Naive thymus-derived CD4-positive, alpha-beta T cell (primary cell): ENCODE measurements at regions of chr10 and their contacts with region 1.

Region 1: DNA sequence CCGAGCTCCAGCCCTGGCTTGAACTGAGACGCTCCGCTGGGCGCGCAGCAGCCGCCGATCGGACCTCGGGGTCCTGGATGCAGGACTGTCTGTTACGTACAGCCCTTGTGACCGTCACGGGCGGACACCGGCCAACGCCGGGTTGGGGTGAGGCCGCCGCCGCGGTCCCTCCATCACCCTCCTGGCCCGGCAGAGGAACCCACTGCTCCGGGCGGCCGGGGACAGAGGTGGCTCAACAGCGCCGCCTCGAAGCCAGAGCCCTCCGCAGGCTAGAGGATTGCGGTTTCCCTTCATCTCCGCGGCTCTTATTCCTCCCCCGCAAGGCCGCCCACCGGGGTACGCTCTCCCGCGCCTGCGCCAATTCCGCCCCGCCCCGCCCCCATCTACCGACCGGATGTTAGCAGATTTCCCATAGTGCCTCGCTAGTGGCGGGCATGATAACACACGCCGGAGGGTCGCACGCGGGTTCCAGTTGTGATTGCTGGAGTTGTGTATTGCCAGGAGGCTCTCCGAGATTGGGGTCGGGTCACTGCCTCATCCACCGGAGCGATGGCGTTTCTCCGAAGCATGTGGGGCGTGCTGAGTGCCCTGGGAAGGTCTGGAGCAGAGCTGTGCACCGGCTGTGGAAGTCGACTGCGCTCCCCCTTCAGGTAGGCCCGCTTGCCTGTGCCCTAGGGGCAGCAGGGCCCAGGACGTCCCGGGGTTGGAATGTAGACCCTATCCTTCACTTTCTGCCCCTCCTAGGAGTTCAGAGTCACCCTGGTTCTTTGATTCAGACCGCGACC is at the start of gene TFAM:
- DNase-seq: peak; percentile 90 to 97 (median 93)
- ATAC-seq: peak; percentile 91
- H3K4me3 ChIP-seq: peak within 1 kb of the TSS; percentile 95
- H3K4me3 Mint-ChIP-seq: peak within 1 kb of the TSS; percentile 96 to 99 (median 98)
- H3K27ac ChIP-seq: peak within 1 kb of the TSS; percentile 86
- H3K27ac Mint-ChIP-seq: peak within 1 kb of the TSS; percentile 91 to 98 (median 96)
- H3K4me1 ChIP-seq: peaks cover 20 to 30% of the 10 kb centered on the region in 2 donors
- H3K4me1 Mint-ChIP-seq: peaks cover 24 to 61% (median 53%) of the 10 kb centered on the region in 7 donors
- H3K27me3 ChIP-seq: no peaks in the 10 kb centered on the region
- H3K27me3 Mint-ChIP-seq: no peaks in the 10 kb centered on the region
- total RNA-seq, gene TFAM: 33.1 to 63.2 (median 44.8) TPM

Region 2: GRCh38 chr10:58177362-58177947 is 207.7 kb before region 1 on chr10:
- CTCF ChIA-PET with region 1: no interaction called
- POLR2A ChIA-PET with region 1: no interaction called
- intact Hi-C with region 1: loop called (anchors 1 to 2 kb)
- DNase-seq: peak in 3 of 9 donors; percentile 12 to 29 (median 25)
- ATAC-seq: no peak
- H3K4me3 ChIP-seq: no peak overlapping the region
- H3K4me3 Mint-ChIP-seq: no peak overlapping the region
- H3K27ac ChIP-seq: no peak overlapping the region
- H3K27ac Mint-ChIP-seq: no peak overlapping the region
- H3K4me1 ChIP-seq: no peaks in the 10 kb centered on the region
- H3K4me1 Mint-ChIP-seq: no peaks in the 10 kb centered on the region
- H3K27me3 ChIP-seq: no peaks in the 10 kb centered on the region
- H3K27me3 Mint-ChIP-seq: peaks cover 0 to 4% (median 0%) of the 10 kb centered on the region in 5 donors

Region 3: GRCh38 chr10:58282615-58283014 is 102.6 kb before region 1 on chr10:
- CTCF ChIA-PET with region 1: no interaction called
- POLR2A ChIA-PET with region 1: no interaction called
- intact Hi-C with region 1: loop called in 1 of 2 experiments (anchors 1 kb)
- DNase-seq: peak in 5 of 9 donors; percentile 17 to 63 (median 40)
- ATAC-seq: peak; percentile 81
- H3K4me3 ChIP-seq: no peak overlapping the region
- H3K4me3 Mint-ChIP-seq: peak overlapping the region in 6 of 10 donors; percentile 1 to 77 (median 24)
- H3K27ac ChIP-seq: peak overlapping the region; percentile 30
- H3K27ac Mint-ChIP-seq: peak overlapping the region; percentile 48 to 91 (median 76)
- H3K4me1 ChIP-seq: no peaks in the 10 kb centered on the region
- H3K4me1 Mint-ChIP-seq: peaks cover 10 to 34% (median 15%) of the 10 kb centered on the region in 7 donors
- H3K27me3 ChIP-seq: no peaks in the 10 kb centered on the region
- H3K27me3 Mint-ChIP-seq: no peaks in the 10 kb centered on the region

Region 4: DNA sequence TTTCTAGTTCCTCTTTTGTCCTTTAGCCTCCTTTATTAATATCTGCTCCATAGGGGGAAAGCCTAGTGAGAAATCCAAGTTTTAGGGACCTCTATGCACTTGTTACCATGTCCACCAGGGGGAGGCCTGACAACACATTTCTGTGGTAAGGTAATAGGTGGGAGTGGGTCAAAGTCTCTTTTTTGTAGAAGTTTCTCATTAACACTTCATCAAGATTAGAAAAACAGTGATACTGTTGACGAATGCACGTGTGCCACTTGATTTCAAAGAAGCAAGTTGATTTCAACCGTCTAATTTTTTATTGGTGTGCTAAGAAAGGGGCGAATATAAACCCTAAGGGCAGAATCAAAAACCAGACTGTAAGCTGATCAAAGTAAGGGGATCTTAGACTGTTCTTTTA is 85.6 kb before region 1 on chr10:
- CTCF ChIA-PET with region 1: interaction called, 40 read pairs
- POLR2A ChIA-PET with region 1: interaction called, 8 read pairs
- intact Hi-C with region 1: loop called (anchors 1 kb)
- DNase-seq: peak; percentile 18 to 63 (median 49)
- ATAC-seq: peak; percentile 94
- H3K4me3 ChIP-seq: no peak overlapping the region
- H3K4me3 Mint-ChIP-seq: no peak overlapping the region
- H3K27ac ChIP-seq: no peak overlapping the region
- H3K27ac Mint-ChIP-seq: no peak overlapping the region
- H3K4me1 ChIP-seq: no peaks in the 10 kb centered on the region
- H3K4me1 Mint-ChIP-seq: peaks cover 0 to 5% (median 0%) of the 10 kb centered on the region in 7 donors
- H3K27me3 ChIP-seq: no peaks in the 10 kb centered on the region
- H3K27me3 Mint-ChIP-seq: peaks cover 9 to 25% (median 14%) of the 10 kb centered on the region in 5 donors

Region 5: DNA sequence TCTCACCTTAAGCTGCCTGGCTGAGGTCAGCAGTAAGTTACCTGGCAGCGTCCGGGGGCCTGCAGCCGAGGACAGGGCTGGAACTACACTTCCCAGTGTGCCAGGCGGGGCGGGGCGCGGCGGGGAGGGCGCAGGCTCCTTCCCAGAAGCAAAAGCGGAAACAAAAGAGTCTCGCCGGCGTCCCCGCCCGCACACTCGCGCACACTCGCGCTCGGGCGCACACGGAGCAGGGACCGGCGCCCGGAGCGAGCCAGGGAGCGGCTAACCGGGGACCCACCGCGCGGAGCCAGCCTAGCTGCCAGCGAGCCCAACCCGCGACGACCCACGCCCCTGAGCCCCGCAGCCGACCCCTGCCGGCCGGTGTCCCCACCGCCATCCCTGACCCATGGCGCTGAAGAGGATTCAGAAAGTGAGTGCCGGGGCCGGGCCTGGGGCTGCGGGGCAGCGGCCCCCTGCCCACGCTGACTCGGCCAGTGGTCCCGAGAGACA is 50.3 kb before region 1 on chr10 and contains the start of gene UBE2D1:
- CTCF ChIA-PET with region 1: interaction called, 4 read pairs
- POLR2A ChIA-PET with region 1: interaction called, 30 read pairs
- intact Hi-C with region 1: loop called (anchors 1 kb)
- DNase-seq: peak; percentile 60 to 84 (median 74)
- ATAC-seq: peak; percentile 98
- H3K4me3 ChIP-seq: peak within 1 kb of the TSS; percentile 71
- H3K4me3 Mint-ChIP-seq: peak within 1 kb of the TSS; percentile 88 to 98 (median 96)
- H3K27ac ChIP-seq: peak within 1 kb of the TSS; percentile 78
- H3K27ac Mint-ChIP-seq: peak within 1 kb of the TSS; percentile 77 to 96 (median 87)
- H3K4me1 ChIP-seq: peaks cover 0 to 15% of the 10 kb centered on the region in 2 donors
- H3K4me1 Mint-ChIP-seq: peaks cover 25 to 44% (median 38%) of the 10 kb centered on the region in 7 donors
- H3K27me3 ChIP-seq: no peaks in the 10 kb centered on the region
- H3K27me3 Mint-ChIP-seq: peaks cover 0 to 7% (median 4%) of the 10 kb centered on the region in 5 donors
- total RNA-seq, gene UBE2D1: 11.3 to 23.8 (median 12.8) TPM

Region 6: DNA sequence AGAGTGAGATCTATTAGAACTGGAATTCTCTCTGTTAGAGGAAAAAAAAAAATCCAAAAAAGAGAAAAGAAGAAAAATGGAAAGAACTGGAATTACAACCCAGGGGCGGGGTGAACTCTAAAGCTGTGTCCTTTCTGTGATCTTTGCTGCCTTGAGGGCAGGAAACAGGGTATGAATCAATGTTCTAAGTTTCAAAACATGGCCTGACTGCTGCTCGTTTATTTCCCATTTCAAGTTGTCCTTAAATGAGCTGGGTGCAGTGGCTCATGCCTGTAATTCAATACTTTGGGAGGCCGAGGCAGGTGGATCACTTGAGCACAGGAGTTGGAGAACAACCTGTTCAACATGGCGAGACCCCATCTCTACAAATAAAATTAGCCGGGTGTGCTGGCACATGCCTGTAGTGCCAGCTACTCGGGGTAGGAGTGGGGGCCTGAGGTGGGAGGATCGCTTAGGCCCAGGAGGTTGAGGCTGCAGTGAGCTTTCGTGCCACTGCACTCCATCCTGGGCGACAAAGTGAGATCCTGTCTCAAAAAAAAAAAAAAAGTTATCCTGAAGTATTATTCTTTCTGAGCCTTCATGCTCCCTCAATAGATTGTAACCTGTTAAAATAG is 24.7 kb before region 1 on chr10:
- CTCF ChIA-PET with region 1: no interaction called
- POLR2A ChIA-PET with region 1: interaction called, 5 read pairs
- intact Hi-C with region 1: loop called in 1 of 2 experiments (anchors 2 kb)
- DNase-seq: no peak
- ATAC-seq: no peak
- H3K4me3 ChIP-seq: no peak overlapping the region
- H3K4me3 Mint-ChIP-seq: peak overlapping the region in 5 of 10 donors; percentile 17 to 57 (median 28)
- H3K27ac ChIP-seq: no peak overlapping the region
- H3K27ac Mint-ChIP-seq: no peak overlapping the region
- H3K4me1 ChIP-seq: peaks cover 0 to 23% of the 10 kb centered on the region in 2 donors
- H3K4me1 Mint-ChIP-seq: peaks cover 13 to 55% (median 30%) of the 10 kb centered on the region in 7 donors
- H3K27me3 ChIP-seq: no peaks in the 10 kb centered on the region
- H3K27me3 Mint-ChIP-seq: no peaks in the 10 kb centered on the region

Region 7: DNA sequence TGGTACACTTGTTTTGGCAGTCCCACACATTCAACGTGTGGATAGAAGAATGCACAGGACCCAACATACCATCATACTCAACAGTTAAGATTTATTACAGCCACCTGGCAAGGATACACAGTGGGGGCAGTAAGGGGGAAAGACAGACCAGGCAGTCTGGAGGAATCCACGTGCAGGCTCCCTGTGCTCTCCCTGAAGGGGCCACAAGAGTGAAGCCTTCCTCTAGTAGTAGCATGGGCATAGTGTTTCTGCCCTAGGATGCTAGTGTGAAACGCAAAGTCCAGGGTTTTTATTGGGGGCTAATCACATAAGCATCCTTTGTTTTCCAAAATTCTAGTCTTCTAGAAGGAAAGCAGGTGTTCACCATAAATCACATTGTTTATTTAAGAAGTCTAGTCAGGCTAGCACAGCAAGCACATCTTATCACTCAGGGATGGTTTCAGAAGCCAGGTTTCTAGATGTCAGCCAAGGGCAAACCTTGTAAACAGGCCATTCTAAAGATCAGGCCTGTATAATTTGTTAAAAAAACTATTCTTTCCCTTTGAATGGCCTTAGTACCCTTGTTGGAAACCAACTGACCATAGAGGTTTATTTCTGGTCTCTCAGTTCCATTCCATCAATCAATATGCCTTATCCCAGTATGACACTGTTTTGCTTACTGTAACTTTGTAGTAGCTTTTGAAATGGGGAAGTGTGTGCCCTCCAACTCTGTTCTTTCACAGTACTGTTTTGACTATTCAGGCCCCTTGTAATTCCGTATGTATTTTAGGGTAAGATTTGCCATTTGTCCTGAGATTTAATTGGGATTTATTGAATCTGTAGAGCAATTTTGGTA is 12.4 kb before region 1 on chr10:
- CTCF ChIA-PET with region 1: interaction called, 5 read pairs
- POLR2A ChIA-PET with region 1: interaction called, 5 read pairs
- intact Hi-C with region 1: loop called in 1 of 2 experiments (anchors 1 kb)
- DNase-seq: no peak
- ATAC-seq: no peak
- H3K4me3 ChIP-seq: no peak overlapping the region
- H3K4me3 Mint-ChIP-seq: no peak overlapping the region
- H3K27ac ChIP-seq: no peak overlapping the region
- H3K27ac Mint-ChIP-seq: no peak overlapping the region
- H3K4me1 ChIP-seq: no peaks in the 10 kb centered on the region
- H3K4me1 Mint-ChIP-seq: no peaks in the 10 kb centered on the region
- H3K27me3 ChIP-seq: no peaks in the 10 kb centered on the region
- H3K27me3 Mint-ChIP-seq: no peaks in the 10 kb centered on the region

Region 8: GRCh38 chr10:58457761-58458616 is 72.8 kb after region 1 on chr10:
- CTCF ChIA-PET with region 1: no interaction called
- POLR2A ChIA-PET with region 1: no interaction called
- intact Hi-C with region 1: no loop called
- DNase-seq: no peak
- ATAC-seq: no peak
- H3K4me3 ChIP-seq: no peak overlapping the region
- H3K4me3 Mint-ChIP-seq: no peak overlapping the region
- H3K27ac ChIP-seq: no peak overlapping the region
- H3K27ac Mint-ChIP-seq: no peak overlapping the region
- H3K4me1 ChIP-seq: no peaks in the 10 kb centered on the region
- H3K4me1 Mint-ChIP-seq: no peaks in the 10 kb centered on the region
- H3K27me3 ChIP-seq: no peaks in the 10 kb centered on the region
- H3K27me3 Mint-ChIP-seq: peaks cover 0 to 28% (median 9%) of the 10 kb centered on the region in 5 donors

Region 9: GRCh38 chr10:58662314-58662713 is 277.1 kb after region 1 on chr10:
- CTCF ChIA-PET with region 1: no interaction called
- POLR2A ChIA-PET with region 1: no interaction called
- intact Hi-C with region 1: no loop called
- DNase-seq: no peak
- ATAC-seq: no peak
- H3K4me3 ChIP-seq: no peak overlapping the region
- H3K4me3 Mint-ChIP-seq: no peak overlapping the region
- H3K27ac ChIP-seq: no peak overlapping the region
- H3K27ac Mint-ChIP-seq: no peak overlapping the region
- H3K4me1 ChIP-seq: peaks cover 0 to 6% of the 10 kb centered on the region in 2 donors
- H3K4me1 Mint-ChIP-seq: peaks cover 0 to 12% (median 6%) of the 10 kb centered on the region in 7 donors
- H3K27me3 ChIP-seq: no peaks in the 10 kb centered on the region
- H3K27me3 Mint-ChIP-seq: peaks cover 0 to 9% (median 0%) of the 10 kb centered on the region in 5 donors